ENCODE measurements at regions of chr20 and their contacts with region 1.

Region 1: DNA sequence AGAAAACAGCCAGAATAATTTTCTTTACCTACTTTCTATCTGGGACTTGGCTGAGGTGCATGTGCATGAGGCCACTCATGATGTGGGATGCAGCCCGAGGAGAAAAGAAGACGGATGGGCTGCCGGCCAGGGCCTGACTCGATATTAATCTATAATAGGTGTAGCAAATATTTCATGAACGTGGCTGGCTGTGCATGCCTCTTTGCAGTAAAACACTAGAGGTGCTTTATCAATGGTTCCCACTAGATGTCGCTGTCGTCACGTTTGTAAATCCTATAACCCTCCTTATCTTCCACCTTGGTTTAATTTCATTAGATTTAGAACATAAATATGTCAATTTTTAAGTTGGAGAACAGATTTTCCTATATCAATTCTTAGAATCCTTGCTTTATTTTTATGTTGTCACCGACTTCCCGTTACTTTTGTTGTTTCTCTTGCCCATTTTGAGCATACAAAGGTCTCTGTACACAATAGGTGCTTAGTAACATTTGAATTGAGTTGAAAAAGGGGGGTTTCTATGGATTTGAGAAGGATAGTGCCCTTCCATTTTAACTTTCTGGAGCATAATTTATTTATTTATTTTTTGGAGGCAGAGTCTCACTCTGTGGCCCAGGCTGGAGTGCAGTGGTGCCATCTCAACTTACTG is 19.6 kb upstream of the FERMT1 start:
- DNase-seq: peak; percentile 33
- H3K4me3 Mint-ChIP-seq: no peak overlapping the region
- H3K27ac Mint-ChIP-seq: no peak overlapping the region
- H3K4me1 Mint-ChIP-seq: no peaks in the 10 kb centered on the region
- H3K27me3 Mint-ChIP-seq: peaks cover 3% of the 10 kb centered on the region

Region 2: GRCh38 chr20:5967469-5967868 is 175.0 kb before region 1 on chr20:
- CTCF ChIA-PET with region 1: no interaction called
- POLR2A ChIA-PET with region 1: no interaction called
- intact Hi-C with region 1: no loop called
- DNase-seq: no peak
- H3K4me3 Mint-ChIP-seq: no peak overlapping the region
- H3K27ac Mint-ChIP-seq: no peak overlapping the region
- H3K4me1 Mint-ChIP-seq: no peaks in the 10 kb centered on the region
- H3K27me3 Mint-ChIP-seq: no peaks in the 10 kb centered on the region

Region 3: DNA sequence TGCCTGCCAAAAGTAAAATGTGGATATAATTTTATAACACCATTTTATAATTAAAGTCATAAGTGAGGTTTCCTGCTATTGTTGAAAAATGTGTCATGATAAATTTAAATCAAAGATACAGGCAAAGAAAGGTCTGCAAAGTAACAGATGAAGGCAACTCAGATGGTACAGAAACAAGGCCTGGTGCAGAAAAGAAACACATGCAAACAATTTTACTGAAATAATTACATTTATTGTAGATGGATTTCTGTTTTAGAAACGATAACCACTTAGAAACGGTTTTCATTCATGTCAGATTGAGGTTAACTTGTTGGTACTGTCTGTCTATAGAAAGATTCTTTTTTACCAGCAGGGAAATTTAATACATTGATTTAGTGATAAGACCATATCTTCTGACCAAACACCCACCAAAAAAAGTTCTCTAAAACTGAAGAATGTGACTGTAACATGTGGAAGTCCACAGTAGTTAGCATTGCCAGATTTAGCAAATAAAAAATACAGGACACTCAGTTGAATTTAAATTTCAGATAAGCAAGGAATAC is 85.9 kb after region 1 on chr20:
- CTCF ChIA-PET with region 1: no interaction called
- POLR2A ChIA-PET with region 1: no interaction called
- intact Hi-C with region 1: no loop called
- DNase-seq: no peak
- H3K4me3 Mint-ChIP-seq: no peak overlapping the region
- H3K27ac Mint-ChIP-seq: no peak overlapping the region
- H3K4me1 Mint-ChIP-seq: no peaks in the 10 kb centered on the region
- H3K27me3 Mint-ChIP-seq: no peaks in the 10 kb centered on the region

Region 4: DNA sequence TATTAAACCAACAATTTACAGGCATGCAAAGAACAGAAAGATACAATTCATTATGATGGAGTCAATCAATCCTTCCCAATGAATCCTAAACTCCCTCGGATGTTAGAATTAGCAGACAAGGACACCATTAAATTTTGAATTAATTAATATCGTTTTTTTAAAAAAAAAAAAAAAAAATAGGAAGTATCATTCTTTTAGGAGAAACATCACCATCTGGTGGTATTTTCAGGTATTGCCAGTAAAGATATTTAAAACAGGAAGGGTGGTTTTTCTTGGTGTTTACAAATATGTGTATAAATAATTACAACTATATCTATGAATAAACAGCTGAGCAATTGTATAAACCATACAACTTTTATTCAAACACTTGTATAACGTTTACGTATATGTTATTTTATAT is 1233.4 kb after region 1 on chr20:
- CTCF ChIA-PET with region 1: no interaction called
- POLR2A ChIA-PET with region 1: no interaction called
- intact Hi-C with region 1: loop called (anchors 5 kb)
- DNase-seq: no peak
- H3K4me3 Mint-ChIP-seq: no peak overlapping the region
- H3K27ac Mint-ChIP-seq: no peak overlapping the region
- H3K4me1 Mint-ChIP-seq: no peaks in the 10 kb centered on the region
- H3K27me3 Mint-ChIP-seq: no peaks in the 10 kb centered on the region